Endothelial cell of umbilical vein (primary cell): ENCODE measurements at regions of chr13 and their contacts with region 1.

Region 1: DNA sequence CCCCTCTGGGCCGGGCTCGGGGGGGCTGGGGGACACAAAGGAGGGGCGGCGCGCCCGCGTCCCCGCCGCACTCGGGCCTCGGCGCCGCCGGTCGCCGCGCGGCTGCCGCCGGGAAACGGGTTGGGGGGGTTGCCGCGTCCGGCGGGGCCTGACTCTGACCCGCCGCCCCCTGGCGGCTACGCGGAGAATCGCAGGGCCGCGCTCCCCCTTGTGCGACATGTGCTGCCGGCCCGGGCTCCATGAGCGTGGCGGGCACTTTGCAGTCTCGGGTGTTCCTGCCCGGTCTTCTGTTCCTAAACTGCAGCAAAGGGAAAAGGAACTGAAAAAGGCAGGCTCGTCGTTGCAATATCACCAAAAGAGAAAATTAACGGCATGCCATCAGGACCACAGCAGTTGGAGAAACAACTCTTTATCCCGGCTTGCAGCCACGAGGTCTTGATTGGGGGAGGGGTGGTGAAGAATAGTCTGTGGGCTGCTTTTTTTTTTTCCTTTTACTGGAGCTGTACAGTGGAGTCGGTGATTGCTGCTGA is 1.5 kb downstream of the MIR17HG start:
- DNase-seq: peak; percentile 89
- H3K4me3 ChIP-seq: peak overlapping the region; percentile 95 to 100 (median 98)
- H3K27ac ChIP-seq: peak overlapping the region; percentile 88
- H3K4me1 ChIP-seq: peaks cover 25% of the 10 kb centered on the region
- H3K27me3 ChIP-seq: peaks cover 5 to 31% of the 10 kb centered on the region in 2 experiments
- CTCF ChIP-seq: peak; percentile 89 to 94
- POLR2A ChIP-seq: no peak

Region 2: DNA sequence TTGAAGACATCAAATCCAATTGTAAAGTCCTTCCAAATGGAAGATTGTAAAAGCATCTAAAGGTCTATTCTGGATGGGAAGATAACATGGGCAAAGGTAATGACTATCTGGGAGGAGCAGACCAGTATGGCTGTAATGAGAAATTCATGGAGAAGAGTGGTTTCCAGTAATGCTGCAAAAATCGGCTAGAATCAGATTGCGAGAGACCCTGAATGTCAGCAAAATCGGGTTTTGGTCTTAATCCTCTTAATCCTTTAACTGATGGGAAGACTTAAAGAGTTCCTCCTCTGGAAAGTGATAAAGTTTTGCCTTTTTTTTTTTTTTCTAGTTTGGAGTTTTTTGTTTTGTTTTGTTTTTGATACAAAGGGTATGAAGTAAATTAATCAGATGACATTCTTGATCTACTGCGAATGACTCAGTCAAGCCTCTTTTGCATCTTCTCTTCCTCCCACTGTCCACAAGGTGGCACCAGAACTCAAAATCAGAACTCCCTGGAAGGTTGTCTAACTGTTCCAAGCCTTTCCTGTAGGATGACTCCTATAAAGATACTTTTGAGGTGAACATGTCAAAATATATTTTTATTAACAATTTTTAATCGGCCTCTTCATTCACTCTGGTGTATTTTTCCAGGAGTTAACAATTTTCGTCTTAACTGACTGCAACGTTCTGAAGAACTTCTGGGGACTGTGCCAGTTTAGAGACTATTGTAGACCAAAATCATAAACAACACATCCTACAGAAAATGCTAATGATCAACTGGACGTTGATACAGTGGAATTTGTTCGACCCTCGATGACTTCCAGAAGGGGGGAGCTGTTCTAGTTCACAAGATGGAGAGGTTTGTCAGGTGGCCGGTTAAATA is 214.8 kb before region 1 on chr13:
- CTCF ChIA-PET with region 1: no interaction called
- POLR2A ChIA-PET with region 1: no interaction called
- dilution Hi-C with region 1: no loop called
- intact Hi-C with region 1: loop called (anchors 1 kb)
- DNase-seq: peak; percentile 63
- H3K4me3 ChIP-seq: no peak overlapping the region
- H3K27ac ChIP-seq: no peak overlapping the region
- H3K4me1 ChIP-seq: no peaks in the 10 kb centered on the region
- H3K27me3 ChIP-seq: peaks cover 0 to 2% of the 10 kb centered on the region in 2 experiments
- CTCF ChIP-seq: peak; percentile 69 to 73
- POLR2A ChIP-seq: no peak

Region 3: DNA sequence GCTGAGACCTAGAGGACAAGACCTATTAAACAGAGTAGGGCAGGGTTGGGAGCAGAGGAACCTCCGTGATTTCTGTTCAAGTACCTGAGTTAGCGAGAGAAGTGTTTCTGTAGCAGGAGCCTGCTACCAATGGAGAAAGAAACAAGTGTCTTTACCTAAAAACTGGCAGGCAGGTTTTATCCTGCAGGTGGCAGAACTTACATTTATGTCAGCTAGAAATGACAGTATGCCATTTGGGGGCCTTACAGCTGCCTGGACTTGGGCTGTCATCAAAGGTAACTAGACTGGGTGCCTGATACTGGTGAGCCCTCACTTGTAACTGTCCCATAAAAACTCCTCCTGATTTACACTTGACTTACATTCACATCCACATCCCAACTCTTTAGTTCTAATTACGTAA is 186.8 kb before region 1 on chr13:
- CTCF ChIA-PET with region 1: no interaction called
- POLR2A ChIA-PET with region 1: no interaction called
- dilution Hi-C with region 1: no loop called
- intact Hi-C with region 1: loop called (anchors 1 kb)
- DNase-seq: no peak
- H3K4me3 ChIP-seq: no peak overlapping the region
- H3K27ac ChIP-seq: no peak overlapping the region
- H3K4me1 ChIP-seq: no peaks in the 10 kb centered on the region
- H3K27me3 ChIP-seq: no peaks in the 10 kb centered on the region
- CTCF ChIP-seq: no peak
- POLR2A ChIP-seq: no peak

Region 4: GRCh38 chr13:91270031-91270430 is 78.9 kb before region 1 on chr13:
- CTCF ChIA-PET with region 1: interaction called, 4 read pairs
- POLR2A ChIA-PET with region 1: no interaction called
- dilution Hi-C with region 1: no loop called
- intact Hi-C with region 1: loop called (anchors 2 kb)
- DNase-seq: peak; percentile 72
- H3K4me3 ChIP-seq: peak overlapping the region in 1 of 3 experiments; percentile 34
- H3K27ac ChIP-seq: peak overlapping the region; percentile 68
- H3K4me1 ChIP-seq: peaks cover 16% of the 10 kb centered on the region
- H3K27me3 ChIP-seq: no peaks in the 10 kb centered on the region
- CTCF ChIP-seq: no peak
- POLR2A ChIP-seq: no peak

Region 5: DNA sequence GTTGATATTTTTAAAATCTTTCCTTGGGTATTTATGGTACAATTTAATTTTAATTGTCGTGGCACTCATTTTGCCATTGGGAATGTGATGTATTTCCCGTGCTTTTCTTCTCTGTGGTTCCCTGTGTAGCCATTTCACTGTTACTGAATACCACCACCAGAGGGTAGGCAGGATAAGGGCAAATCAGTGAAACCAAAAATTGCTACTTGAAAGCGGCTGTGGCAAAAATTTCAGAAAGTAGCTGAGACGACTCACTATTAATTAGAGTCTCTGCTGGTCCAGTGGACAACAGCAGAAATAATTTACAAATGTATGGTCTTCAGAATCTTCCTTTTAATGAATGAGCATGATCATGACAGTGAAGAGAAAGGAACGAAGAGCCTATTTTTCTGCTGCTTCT is 35.9 kb before region 1 on chr13:
- CTCF ChIA-PET with region 1: interaction called, 12 read pairs
- POLR2A ChIA-PET with region 1: no interaction called
- dilution Hi-C with region 1: no loop called
- intact Hi-C with region 1: loop called (anchors 1 kb)
- DNase-seq: peak; percentile 51
- H3K4me3 ChIP-seq: no peak overlapping the region
- H3K27ac ChIP-seq: no peak overlapping the region
- H3K4me1 ChIP-seq: no peaks in the 10 kb centered on the region
- H3K27me3 ChIP-seq: peaks cover 4 to 20% of the 10 kb centered on the region in 2 experiments
- CTCF ChIP-seq: peak; percentile 31 to 48
- POLR2A ChIP-seq: no peak

Region 6: GRCh38 chr13:91331047-91331915 is 17.7 kb before region 1 on chr13:
- CTCF ChIA-PET with region 1: interaction called, 8 read pairs
- POLR2A ChIA-PET with region 1: no interaction called
- dilution Hi-C with region 1: no loop called
- intact Hi-C with region 1: loop called (anchors 1 kb)
- DNase-seq: no peak
- H3K4me3 ChIP-seq: no peak overlapping the region
- H3K27ac ChIP-seq: no peak overlapping the region
- H3K4me1 ChIP-seq: peaks cover 4% of the 10 kb centered on the region
- H3K27me3 ChIP-seq: peaks cover 0 to 7% of the 10 kb centered on the region in 2 experiments
- CTCF ChIP-seq: no peak
- POLR2A ChIP-seq: no peak

Region 7: DNA sequence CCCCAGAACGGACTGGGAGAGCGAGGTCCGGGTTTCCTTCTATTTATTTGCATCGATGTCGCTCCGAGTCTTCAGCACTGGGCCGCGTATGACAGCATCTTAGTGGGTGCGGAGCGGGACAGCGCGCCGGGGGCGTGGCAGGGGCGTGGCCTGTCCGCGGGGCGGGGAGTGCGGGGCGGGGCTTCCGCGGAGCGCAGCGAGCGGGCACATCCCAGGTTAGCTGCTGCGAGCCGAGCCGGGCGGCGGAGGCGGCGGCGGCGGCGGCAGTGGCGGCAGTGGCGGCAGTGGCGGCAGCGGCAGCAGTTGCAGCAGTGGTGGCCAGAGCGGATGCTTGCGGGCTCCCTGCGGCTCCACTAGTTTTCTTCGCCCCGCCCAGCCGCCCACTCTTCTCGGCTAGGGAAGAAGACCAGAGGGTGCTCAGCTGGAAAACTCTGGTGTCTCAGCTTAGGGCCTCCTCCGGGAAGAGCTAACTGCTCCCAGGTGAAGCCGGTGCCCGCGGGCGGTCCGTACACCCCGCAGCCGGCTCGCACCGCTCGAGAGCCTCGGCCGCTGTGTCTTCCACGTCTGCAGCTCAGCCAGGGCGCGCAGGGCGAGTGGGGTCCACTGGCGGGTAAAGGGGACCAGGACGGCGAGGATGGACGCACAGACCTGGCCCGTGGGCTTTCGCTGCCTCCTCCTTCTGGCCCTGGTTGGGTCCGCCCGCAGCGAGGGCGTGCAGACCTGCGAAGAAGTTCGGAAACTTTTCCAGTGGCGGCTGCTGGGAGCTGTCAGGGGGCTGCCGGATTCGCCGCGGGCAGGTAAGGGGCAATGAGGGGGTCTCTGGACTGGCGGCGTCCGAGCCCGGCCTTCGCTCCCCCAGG is 49.7 kb after region 1 on chr13 and contains the start of gene GPC5:
- CTCF ChIA-PET with region 1: no interaction called
- POLR2A ChIA-PET with region 1: no interaction called
- dilution Hi-C with region 1: no loop called
- intact Hi-C with region 1: loop called (anchors 2 kb)
- DNase-seq: peak; percentile 74
- H3K4me3 ChIP-seq: peak within 1 kb of the TSS in 2 of 3 experiments; percentile 10 to 40
- H3K27ac ChIP-seq: no peak within 1 kb of the TSS
- H3K4me1 ChIP-seq: peaks cover 8% of the 10 kb centered on the region
- H3K27me3 ChIP-seq: peaks cover 47 to 66% of the 10 kb centered on the region in 2 experiments
- CTCF ChIP-seq: no peak
- POLR2A ChIP-seq: no peak
- total RNA-seq, gene GPC5: 0.97 and 1.7 TPM in 2 replicates

Region 8: GRCh38 chr13:92097337-92097903 is 748.4 kb after region 1 on chr13:
- CTCF ChIA-PET with region 1: no interaction called
- POLR2A ChIA-PET with region 1: no interaction called
- dilution Hi-C with region 1: no loop called
- intact Hi-C with region 1: no loop called
- DNase-seq: no peak
- H3K4me3 ChIP-seq: no peak overlapping the region
- H3K27ac ChIP-seq: no peak overlapping the region
- H3K4me1 ChIP-seq: no peaks in the 10 kb centered on the region
- H3K27me3 ChIP-seq: no peaks in the 10 kb centered on the region
- CTCF ChIP-seq: no peak
- POLR2A ChIP-seq: no peak